Cardiac septum (tissue), 1 donor: ENCODE measurements at regions of chr10 and their contacts with region 1.

Region 1: GRCh38 chr10:4656576-4657182 is 169.3 kb upstream of the AKR1E2 start:
- DNase-seq: no peak

Region 2: DNA sequence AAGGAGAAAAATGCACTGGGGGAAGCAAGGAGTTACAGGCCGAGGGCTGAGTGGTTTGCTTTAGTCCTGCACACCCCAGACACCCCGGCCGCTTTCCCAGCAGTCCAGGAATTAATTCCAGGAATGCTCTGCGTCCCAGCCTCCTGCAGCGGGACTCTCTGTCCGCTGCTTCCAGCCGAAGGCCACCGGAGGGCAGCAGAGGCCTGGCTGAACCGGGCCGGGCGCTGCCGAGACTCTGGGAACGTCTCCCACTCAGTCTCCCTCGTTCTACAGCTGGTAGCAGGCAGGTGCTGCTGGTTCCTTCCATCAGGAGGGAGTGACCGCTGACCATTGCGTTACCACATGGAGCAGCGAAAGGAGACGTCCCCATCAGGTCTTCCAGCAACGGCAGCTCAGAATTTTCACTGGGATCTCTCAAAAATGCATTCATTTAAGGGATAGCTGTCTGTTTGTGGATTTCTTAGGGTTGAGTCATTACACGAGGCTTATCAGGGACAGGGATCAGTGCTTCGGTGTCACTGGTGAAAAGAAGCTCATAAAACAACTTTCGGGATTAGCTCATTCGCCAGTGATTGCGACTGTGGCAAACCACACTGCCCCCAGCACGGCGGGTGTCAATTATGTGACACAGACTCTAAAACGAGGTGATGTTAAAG is 1459.2 kb before region 1 on chr10:
- intact Hi-C with region 1: loop called (anchors 10 kb)
- DNase-seq: peak; percentile 88

Region 3: GRCh38 chr10:3239066-3239919 is 1417.4 kb before region 1 on chr10:
- intact Hi-C with region 1: loop called (anchors 5 kb)
- DNase-seq: peak; percentile 91

Region 4: GRCh38 chr10:4522296-4523000 is 134.2 kb before region 1 on chr10:
- intact Hi-C with region 1: no loop called
- DNase-seq: no peak

Region 5: GRCh38 chr10:4926400-4926799 is 269.7 kb after region 1 on chr10:
- intact Hi-C with region 1: no loop called
- DNase-seq: no peak

Region 6: DNA sequence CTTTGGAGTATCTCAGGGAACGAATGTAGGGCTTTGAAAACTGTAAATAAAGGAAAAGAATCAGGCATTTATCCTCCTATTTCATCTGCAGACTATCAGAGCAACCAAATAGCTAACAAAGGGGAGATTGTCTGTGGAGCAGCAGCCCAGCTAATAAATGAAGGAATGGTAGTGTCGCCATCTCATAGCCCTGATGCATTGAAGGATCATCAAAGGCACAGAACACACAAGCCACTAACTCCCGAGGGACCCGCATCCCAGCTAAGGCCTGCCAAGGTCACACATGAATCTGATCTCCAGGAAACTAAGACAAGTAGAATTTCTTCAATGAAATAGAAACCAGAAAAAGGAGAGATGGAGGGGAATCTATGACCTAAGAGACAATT is 804.5 kb after region 1 on chr10:
- intact Hi-C with region 1: no loop called
- DNase-seq: no peak